Caco-2 (cell line): ENCODE measurements at regions of chr5 and their contacts with region 1.

Region 1: DNA sequence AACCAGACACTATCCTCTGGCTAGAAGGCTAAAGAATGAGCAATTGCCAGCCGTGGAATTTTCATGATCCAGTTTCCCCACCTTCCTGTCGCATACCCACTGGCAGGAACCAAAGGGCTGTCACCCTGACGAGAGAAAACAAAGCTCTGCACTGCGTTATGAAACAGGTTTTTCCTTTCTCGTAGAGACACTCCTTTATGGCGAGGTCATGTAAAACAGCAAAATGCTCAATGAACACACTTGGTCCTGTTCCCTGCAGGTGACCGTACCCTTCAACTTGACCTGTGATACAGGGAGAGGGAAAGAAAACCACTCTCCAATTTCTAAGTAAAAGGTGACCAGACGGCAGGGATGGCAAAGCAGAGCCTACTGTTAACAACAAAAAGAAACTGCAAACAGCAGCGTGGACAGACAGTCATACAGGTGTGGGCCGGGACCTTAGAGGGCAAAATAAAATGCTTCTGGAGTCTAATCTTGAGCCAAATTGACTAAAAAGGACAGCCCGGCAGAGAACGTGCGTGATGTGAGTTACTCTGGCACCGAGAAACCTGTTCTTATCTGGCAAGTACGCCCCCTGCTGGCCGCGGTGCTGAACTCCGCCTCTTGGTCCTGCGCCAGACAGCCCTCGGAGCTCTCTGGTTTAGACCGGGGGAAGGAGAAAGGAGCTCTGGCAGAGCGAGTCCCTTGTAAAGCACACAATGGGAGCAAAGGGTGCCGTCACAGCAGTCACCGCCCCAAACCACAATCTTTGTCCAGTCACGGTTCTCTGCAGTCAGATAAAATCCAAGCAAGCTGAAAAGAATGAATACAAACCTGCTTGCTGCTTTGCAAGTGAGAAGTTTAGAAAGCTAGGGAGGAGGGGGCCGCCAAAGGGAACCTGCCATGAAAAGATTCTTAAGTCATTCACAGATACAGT is 98.9 kb downstream of the EFNA5 start:
- DNase-seq: peak; percentile 91 to 93
- H3K4me3 ChIP-seq: peak overlapping the region; percentile 36
- H3K4me3 Mint-ChIP-seq: peak overlapping the region; percentile 70
- H3K27ac Mint-ChIP-seq: no peak overlapping the region
- H3K4me1 ChIP-seq: peaks cover 10% of the 10 kb centered on the region
- H3K4me1 Mint-ChIP-seq: peaks cover 13% of the 10 kb centered on the region
- H3K27me3 ChIP-seq: no peaks in the 10 kb centered on the region
- H3K27me3 Mint-ChIP-seq: no peaks in the 10 kb centered on the region
- CTCF ChIP-seq: peak; percentile 94 to 95

Region 2: GRCh38 chr5:107104040-107104995 is 467.6 kb before region 1 on chr5:
- CTCF ChIA-PET with region 1: interaction called, 4 read pairs
- POLR2A ChIA-PET with region 1: no interaction called
- intact Hi-C with region 1: loop called (anchors 10 kb)
- DNase-seq: peak in 1 of 2 experiments; percentile 28
- H3K4me3 ChIP-seq: no peak overlapping the region
- H3K4me3 Mint-ChIP-seq: no peak overlapping the region
- H3K27ac Mint-ChIP-seq: no peak overlapping the region
- H3K4me1 ChIP-seq: no peaks in the 10 kb centered on the region
- H3K4me1 Mint-ChIP-seq: no peaks in the 10 kb centered on the region
- H3K27me3 ChIP-seq: no peaks in the 10 kb centered on the region
- H3K27me3 Mint-ChIP-seq: peaks cover 2% of the 10 kb centered on the region
- CTCF ChIP-seq: peak in 1 of 2 experiments; percentile 47

Region 3: DNA sequence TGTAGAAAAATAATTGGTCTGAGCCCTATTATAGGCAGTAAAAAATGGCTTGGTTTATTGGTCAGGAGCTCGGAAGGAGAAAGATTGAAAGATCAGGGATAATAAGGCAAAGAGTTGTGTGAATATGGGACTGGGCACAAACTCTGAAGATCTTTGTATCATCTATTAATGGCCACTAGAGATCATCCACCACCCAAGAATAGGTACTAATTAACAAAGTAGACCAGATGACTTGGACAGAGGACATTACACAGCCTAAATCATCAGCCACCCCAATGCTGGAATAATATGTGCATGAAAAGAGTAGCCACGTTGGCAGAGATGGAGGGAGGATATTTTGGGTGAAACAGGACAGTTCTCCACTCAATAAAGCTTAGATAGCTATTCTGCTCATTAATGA is 265.3 kb before region 1 on chr5:
- CTCF ChIA-PET with region 1: no interaction called
- POLR2A ChIA-PET with region 1: no interaction called
- intact Hi-C with region 1: loop called (anchors 5 kb)
- DNase-seq: no peak
- H3K4me3 ChIP-seq: no peak overlapping the region
- H3K4me3 Mint-ChIP-seq: no peak overlapping the region
- H3K27ac Mint-ChIP-seq: no peak overlapping the region
- H3K4me1 ChIP-seq: no peaks in the 10 kb centered on the region
- H3K4me1 Mint-ChIP-seq: peaks cover 7% of the 10 kb centered on the region
- H3K27me3 ChIP-seq: no peaks in the 10 kb centered on the region
- H3K27me3 Mint-ChIP-seq: peaks cover 4% of the 10 kb centered on the region
- CTCF ChIP-seq: no peak

Region 4: GRCh38 chr5:107456281-107456715 is 115.6 kb before region 1 on chr5:
- CTCF ChIA-PET with region 1: interaction called, 3 read pairs
- POLR2A ChIA-PET with region 1: no interaction called
- intact Hi-C with region 1: loop called (anchors 5 kb)
- DNase-seq: no peak
- H3K4me3 ChIP-seq: no peak overlapping the region
- H3K4me3 Mint-ChIP-seq: no peak overlapping the region
- H3K27ac Mint-ChIP-seq: no peak overlapping the region
- H3K4me1 ChIP-seq: peaks cover 34% of the 10 kb centered on the region
- H3K4me1 Mint-ChIP-seq: peaks cover 27% of the 10 kb centered on the region
- H3K27me3 ChIP-seq: no peaks in the 10 kb centered on the region
- H3K27me3 Mint-ChIP-seq: no peaks in the 10 kb centered on the region
- CTCF ChIP-seq: no peak

Region 5: DNA sequence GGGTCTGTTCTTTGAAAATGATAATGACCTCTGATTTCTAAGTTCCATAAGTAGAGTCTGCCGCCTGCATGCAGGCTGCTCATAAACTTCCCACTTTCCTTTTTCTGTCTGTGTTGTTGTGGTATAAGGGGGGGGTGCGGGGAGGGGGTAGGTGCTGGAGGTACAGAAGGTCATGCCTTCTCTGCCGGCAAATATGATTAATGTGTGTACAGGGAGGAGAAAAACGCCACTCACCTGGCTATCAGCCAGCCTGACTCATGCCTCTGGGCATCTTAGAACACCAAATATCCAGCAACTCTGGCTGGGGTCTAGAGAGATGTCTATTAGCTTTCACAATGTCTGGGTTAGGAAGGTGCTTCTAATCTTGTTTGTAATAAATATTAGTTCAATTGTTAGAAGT is 29.5 kb before region 1 on chr5:
- CTCF ChIA-PET with region 1: interaction called, 4 read pairs
- POLR2A ChIA-PET with region 1: no interaction called
- intact Hi-C with region 1: loop called (anchors 2 kb)
- DNase-seq: peak; percentile 34 to 44
- H3K4me3 ChIP-seq: no peak overlapping the region
- H3K4me3 Mint-ChIP-seq: no peak overlapping the region
- H3K27ac Mint-ChIP-seq: no peak overlapping the region
- H3K4me1 ChIP-seq: peaks cover 10% of the 10 kb centered on the region; the same call in 1 of the 2 replicates
- H3K4me1 Mint-ChIP-seq: no peaks in the 10 kb centered on the region
- H3K27me3 ChIP-seq: no peaks in the 10 kb centered on the region
- H3K27me3 Mint-ChIP-seq: no peaks in the 10 kb centered on the region
- CTCF ChIP-seq: no peak

Region 6: GRCh38 chr5:107557051-107557658 is 14.7 kb before region 1 on chr5:
- CTCF ChIA-PET with region 1: interaction called, 11 read pairs
- POLR2A ChIA-PET with region 1: no interaction called
- intact Hi-C with region 1: loop called (anchors 1 kb)
- DNase-seq: peak; percentile 43 to 69
- H3K4me3 ChIP-seq: no peak overlapping the region
- H3K4me3 Mint-ChIP-seq: no peak overlapping the region
- H3K27ac Mint-ChIP-seq: no peak overlapping the region
- H3K4me1 ChIP-seq: peaks cover 9% of the 10 kb centered on the region; the same call in 1 of the 2 replicates
- H3K4me1 Mint-ChIP-seq: peaks cover 11% of the 10 kb centered on the region
- H3K27me3 ChIP-seq: no peaks in the 10 kb centered on the region
- H3K27me3 Mint-ChIP-seq: peaks cover 5% of the 10 kb centered on the region
- CTCF ChIP-seq: no peak

Region 7: GRCh38 chr5:107604832-107605389 is 33.0 kb after region 1 on chr5:
- CTCF ChIA-PET with region 1: no interaction called
- POLR2A ChIA-PET with region 1: no interaction called
- intact Hi-C with region 1: no loop called
- DNase-seq: no peak
- H3K4me3 ChIP-seq: no peak overlapping the region
- H3K4me3 Mint-ChIP-seq: no peak overlapping the region
- H3K27ac Mint-ChIP-seq: no peak overlapping the region
- H3K4me1 ChIP-seq: no peaks in the 10 kb centered on the region
- H3K4me1 Mint-ChIP-seq: peaks cover 9% of the 10 kb centered on the region
- H3K27me3 ChIP-seq: no peaks in the 10 kb centered on the region
- H3K27me3 Mint-ChIP-seq: peaks cover 6% of the 10 kb centered on the region
- CTCF ChIP-seq: no peak